ENCODE measurements at regions of chr11 and their contacts with region 1.

Region 1: GRCh38 chr11:34492806-34493414 is 20.7 kb downstream of the ELF5 start:
- DNase-seq: peak; percentile 51
- ATAC-seq: peak; percentile 75
- H3K4me3 ChIP-seq: no peak overlapping the region
- H3K27ac ChIP-seq: no peak overlapping the region
- H3K4me1 ChIP-seq: no peaks in the 10 kb centered on the region
- H3K27me3 ChIP-seq: peaks cover 46% of the 10 kb centered on the region
- CTCF ChIP-seq: peak; percentile 69
- POLR2A ChIP-seq: no peak
- RAD21 ChIP-seq: peak; percentile 52

Region 2: DNA sequence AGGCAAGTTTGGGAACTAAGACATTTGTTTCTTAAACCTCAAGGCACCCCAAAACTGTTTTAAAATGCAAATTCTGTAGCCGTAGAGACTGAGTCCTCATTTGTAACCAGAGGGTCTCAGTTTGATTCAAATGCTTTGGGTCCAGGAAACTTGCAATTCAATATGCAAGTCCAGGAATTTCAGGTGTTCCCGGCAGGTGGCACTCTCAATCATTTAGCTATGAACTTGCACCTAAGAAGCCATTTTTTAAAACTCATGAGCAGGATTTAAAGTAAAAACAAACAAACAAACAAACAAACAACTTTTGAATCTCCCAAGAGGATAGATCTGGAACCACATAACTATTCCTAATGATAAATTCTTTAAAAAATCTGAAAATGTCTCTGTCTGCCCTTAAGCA is 126.4 kb before region 1 on chr11:
- CTCF ChIA-PET with region 1: interaction called, 6 read pairs
- POLR2A ChIA-PET with region 1: no interaction called
- dilution Hi-C with region 1: no loop called
- in situ Hi-C with region 1: loop called (anchors 5 kb)
- intact Hi-C with region 1: no loop called
- DNase-seq: no peak
- ATAC-seq: no peak
- H3K4me3 ChIP-seq: no peak overlapping the region
- H3K27ac ChIP-seq: no peak overlapping the region
- H3K4me1 ChIP-seq: no peaks in the 10 kb centered on the region
- H3K27me3 ChIP-seq: peaks cover 19% of the 10 kb centered on the region
- CTCF ChIP-seq: 0 out of 2 replicates have a peak, but pooled peaks have one; percentile 16
- POLR2A ChIP-seq: no peak
- RAD21 ChIP-seq: no peak

Region 3: DNA sequence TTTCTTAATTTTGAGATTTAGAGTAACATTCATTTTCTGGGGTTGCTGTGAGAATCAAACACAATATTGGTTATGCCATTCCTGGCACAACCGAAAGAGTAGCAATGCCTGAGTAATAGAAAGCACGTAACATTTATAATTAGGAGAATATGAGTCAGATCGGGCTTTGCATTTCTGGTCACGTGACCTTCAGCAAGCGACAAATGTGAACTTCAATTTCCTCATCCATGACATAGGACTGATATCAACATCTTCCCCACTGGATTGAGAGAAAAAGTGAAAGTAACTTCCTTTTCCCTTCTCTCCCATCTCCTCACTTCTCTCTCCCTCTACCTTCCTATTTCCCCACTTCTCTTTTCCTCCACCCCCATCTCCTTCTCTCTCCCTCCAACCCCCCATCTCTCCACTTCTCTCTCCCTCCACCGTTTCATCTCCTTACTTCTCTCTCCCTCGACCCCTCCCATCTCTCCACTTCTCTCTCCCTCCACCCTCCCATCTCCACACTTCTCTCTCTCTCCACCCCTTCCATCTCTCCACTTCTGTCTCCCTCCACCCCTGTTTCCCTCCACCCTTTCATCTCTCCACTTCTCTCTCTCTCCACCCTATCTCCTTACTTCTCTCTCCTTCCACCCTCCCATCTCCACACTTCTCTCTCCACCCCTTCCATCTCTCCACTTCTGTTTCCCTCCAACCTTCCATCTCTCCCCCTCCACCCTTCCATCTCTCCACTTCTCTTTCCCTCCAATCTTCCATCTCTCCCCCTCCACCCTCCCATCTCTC is 87.6 kb before region 1 on chr11:
- CTCF ChIA-PET with region 1: no interaction called
- POLR2A ChIA-PET with region 1: no interaction called
- dilution Hi-C with region 1: no loop called
- in situ Hi-C with region 1: no loop called
- intact Hi-C with region 1: no loop called
- DNase-seq: no peak
- ATAC-seq: no peak; the same call in 1 of the 2 replicates
- H3K4me3 ChIP-seq: no peak overlapping the region
- H3K27ac ChIP-seq: no peak overlapping the region
- H3K4me1 ChIP-seq: no peaks in the 10 kb centered on the region
- H3K27me3 ChIP-seq: peaks cover 26% of the 10 kb centered on the region
- CTCF ChIP-seq: no peak
- POLR2A ChIP-seq: no peak
- RAD21 ChIP-seq: no peak

Measured in IMR-90 (cell line).